ENCODE measurements at regions of chr12 and their contacts with region 1.

Region 1: GRCh38 chr12:100733817-100734593 is 60.6 kb upstream of the ANO4 start:
- DNase-seq: no peak
- H3K4me3 ChIP-seq: no peak overlapping the region
- H3K27me3 ChIP-seq: no peaks in the 10 kb centered on the region
- CTCF ChIP-seq: peak; percentile 75

Region 2: GRCh38 chr12:100672075-100672592 is 61.9 kb before region 1 on chr12:
- CTCF ChIA-PET with region 1: interaction called, 15 read pairs
- POLR2A ChIA-PET with region 1: no interaction called
- DNase-seq: no peak
- H3K4me3 ChIP-seq: no peak overlapping the region
- H3K27me3 ChIP-seq: peaks cover 1% of the 10 kb centered on the region
- CTCF ChIP-seq: peak; percentile 61

Region 3: DNA sequence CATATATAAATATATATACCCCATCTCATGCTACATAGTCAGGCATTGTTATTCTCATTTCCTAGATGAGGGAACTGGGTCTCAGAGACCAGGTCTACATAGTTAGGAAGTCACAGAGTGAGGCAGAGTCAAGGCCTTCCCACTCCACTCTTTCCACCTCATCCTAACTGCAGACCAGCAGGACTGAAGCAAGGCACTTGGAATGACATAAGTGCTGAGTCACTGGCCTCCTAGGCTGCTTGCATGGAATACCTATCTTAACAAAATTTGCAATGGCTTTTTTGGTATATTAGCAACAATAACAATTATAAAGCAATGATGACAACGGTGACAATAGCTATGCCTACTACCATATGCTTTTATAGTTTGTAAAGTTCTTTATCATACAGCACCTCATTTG is 55.1 kb after region 1 on chr12:
- CTCF ChIA-PET with region 1: no interaction called
- POLR2A ChIA-PET with region 1: no interaction called
- DNase-seq: no peak
- H3K4me3 ChIP-seq: no peak overlapping the region
- H3K27me3 ChIP-seq: no peaks in the 10 kb centered on the region
- CTCF ChIP-seq: no peak

Region 4: DNA sequence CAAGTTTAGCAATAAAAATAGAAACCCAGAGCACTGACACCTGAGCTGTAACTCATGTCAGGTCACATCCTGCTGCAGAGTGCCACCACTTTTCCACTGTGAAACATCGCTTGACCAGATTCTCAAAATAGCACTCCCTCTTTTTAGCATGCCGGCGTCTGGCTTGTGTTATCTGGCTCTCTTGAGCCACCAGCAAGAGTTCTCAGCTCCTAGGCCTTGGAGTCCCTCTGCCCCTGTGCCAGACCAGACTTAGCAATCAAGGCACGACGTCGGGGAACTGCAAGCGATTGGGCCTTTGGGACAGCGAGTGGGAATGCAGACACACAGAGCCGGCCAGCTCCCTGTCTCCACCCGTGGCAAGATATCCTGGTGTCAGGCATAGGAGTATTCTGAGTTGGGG is 793.7 kb after region 1 on chr12:
- CTCF ChIA-PET with region 1: no interaction called
- POLR2A ChIA-PET with region 1: no interaction called
- DNase-seq: no peak
- H3K4me3 ChIP-seq: no peak overlapping the region
- H3K27me3 ChIP-seq: no peaks in the 10 kb centered on the region
- CTCF ChIP-seq: no peak

Measured in BJ (cell line).